ENCODE measurements at regions of chr1 and their contacts with region 1.

Region 1: DNA sequence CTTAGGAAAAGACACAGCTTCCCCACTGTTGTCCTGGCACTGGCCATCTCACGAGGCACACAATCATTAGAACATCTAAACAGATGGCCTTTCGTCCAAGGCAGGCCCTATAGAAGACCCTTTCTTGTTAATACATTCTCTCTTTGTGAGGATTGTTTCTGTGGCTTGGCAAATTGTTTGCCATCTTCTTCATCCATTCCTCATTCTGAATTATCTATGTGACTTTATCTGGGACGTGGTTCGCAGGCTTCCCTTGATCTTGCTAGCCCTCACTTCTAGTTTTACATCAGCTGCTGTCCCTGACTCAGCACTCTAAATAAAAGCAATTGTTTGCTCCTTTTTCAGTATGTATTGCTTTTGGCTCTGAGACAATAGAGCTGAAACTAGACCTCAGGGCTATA is 101.1 kb upstream of the ZC3H11B start:
- DNase-seq: no peak
- H3K4me3 ChIP-seq: no peak overlapping the region
- H3K27ac ChIP-seq: no peak overlapping the region
- H3K4me1 ChIP-seq: no peaks in the 10 kb centered on the region
- H3K27me3 ChIP-seq: no peaks in the 10 kb centered on the region
- CTCF ChIP-seq: no peak
- POLR2A ChIP-seq: no peak

Region 2: DNA sequence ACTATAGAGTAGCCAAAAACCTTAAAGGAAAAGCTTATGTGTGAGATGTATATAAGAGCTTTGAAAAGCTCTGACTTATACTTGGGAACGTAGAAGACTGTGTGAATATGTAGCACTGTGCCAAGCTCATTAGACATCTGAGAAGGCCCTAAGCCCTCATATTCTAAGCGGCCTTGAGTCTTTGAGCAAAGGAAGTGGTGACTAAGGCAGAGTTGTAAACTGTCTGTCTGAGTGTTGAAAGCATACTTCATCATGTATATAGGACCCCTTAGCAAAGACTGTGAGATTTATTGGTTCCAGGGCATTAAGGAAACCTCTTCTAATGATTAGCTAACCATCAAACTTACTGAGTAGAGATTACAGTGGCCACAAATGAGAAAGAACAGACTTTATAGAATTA is 693.6 kb before region 1 on chr1:
- intact Hi-C with region 1: no loop called
- DNase-seq: no peak
- H3K4me3 ChIP-seq: no peak overlapping the region
- H3K27ac ChIP-seq: no peak overlapping the region
- H3K4me1 ChIP-seq: no peaks in the 10 kb centered on the region
- H3K27me3 ChIP-seq: no peaks in the 10 kb centered on the region
- CTCF ChIP-seq: no peak
- POLR2A ChIP-seq: no peak

Region 3: GRCh38 chr1:219659005-219659600 is 54.9 kb before region 1 on chr1:
- intact Hi-C with region 1: loop called (anchors 2 kb)
- DNase-seq: no peak
- H3K4me3 ChIP-seq: no peak overlapping the region
- H3K27ac ChIP-seq: no peak overlapping the region
- H3K4me1 ChIP-seq: no peaks in the 10 kb centered on the region
- H3K27me3 ChIP-seq: no peaks in the 10 kb centered on the region
- CTCF ChIP-seq: no peak
- POLR2A ChIP-seq: no peak